CD4-positive, alpha-beta memory T cell (primary cell): ENCODE measurements at regions of chr11 and their contacts with region 1.

Region 1: GRCh38 chr11:72793425-72794367 is at the start of gene STARD10:
- DNase-seq: peak; percentile 94 to 98 (median 95)
- H3K4me3 ChIP-seq: peak within 1 kb of the TSS; percentile 81 to 96
- H3K4me3 Mint-ChIP-seq: peak within 1 kb of the TSS; percentile 96 to 99 (median 98)
- H3K27ac ChIP-seq: peak within 1 kb of the TSS; percentile 97
- H3K27ac Mint-ChIP-seq: peak within 1 kb of the TSS; percentile 99 to 100 (median 100)
- H3K4me1 ChIP-seq: peaks cover 23% of the 10 kb centered on the region
- H3K4me1 Mint-ChIP-seq: peaks cover 13 to 28% (median 22%) of the 10 kb centered on the region in 4 donors
- H3K27me3 ChIP-seq: no peaks in the 10 kb centered on the region
- H3K27me3 Mint-ChIP-seq: no peaks in the 10 kb centered on the region
- total RNA-seq, gene STARD10: 23.0 to 23.5 TPM

Region 2: GRCh38 chr11:72642884-72643511 is 150.7 kb before region 1 on chr11:
- CTCF ChIA-PET with region 1: no interaction called
- POLR2A ChIA-PET with region 1: no interaction called
- intact Hi-C with region 1: no loop called
- DNase-seq: peak in 4 of 5 donors; percentile 66 to 75 (median 67)
- H3K4me3 ChIP-seq: peak overlapping the region in 1 of 2 donors; percentile 47
- H3K4me3 Mint-ChIP-seq: peak overlapping the region in 5 of 8 donors; percentile 10 to 76 (median 47)
- H3K27ac ChIP-seq: no peak overlapping the region
- H3K27ac Mint-ChIP-seq: no peak overlapping the region
- H3K4me1 ChIP-seq: no peaks in the 10 kb centered on the region
- H3K4me1 Mint-ChIP-seq: peaks cover 0 to 9% (median 0%) of the 10 kb centered on the region in 4 donors
- H3K27me3 ChIP-seq: peaks cover 11% of the 10 kb centered on the region
- H3K27me3 Mint-ChIP-seq: peaks cover 3% of the 10 kb centered on the region in 2 donors

Region 3: GRCh38 chr11:72683782-72684200 is 109.9 kb before region 1 on chr11:
- CTCF ChIA-PET with region 1: interaction called, 15 read pairs
- POLR2A ChIA-PET with region 1: interaction called, 4 read pairs
- intact Hi-C with region 1: loop called (anchors 5 kb)
- DNase-seq: peak; percentile 43 to 58 (median 53)
- H3K4me3 ChIP-seq: no peak overlapping the region
- H3K4me3 Mint-ChIP-seq: no peak overlapping the region
- H3K27ac ChIP-seq: no peak overlapping the region
- H3K27ac Mint-ChIP-seq: peak overlapping the region in 2 of 7 donors; percentile 13 to 57
- H3K4me1 ChIP-seq: no peaks in the 10 kb centered on the region
- H3K4me1 Mint-ChIP-seq: peaks cover 11 to 23% (median 15%) of the 10 kb centered on the region in 4 donors
- H3K27me3 ChIP-seq: no peaks in the 10 kb centered on the region
- H3K27me3 Mint-ChIP-seq: no peaks in the 10 kb centered on the region

Region 4: DNA sequence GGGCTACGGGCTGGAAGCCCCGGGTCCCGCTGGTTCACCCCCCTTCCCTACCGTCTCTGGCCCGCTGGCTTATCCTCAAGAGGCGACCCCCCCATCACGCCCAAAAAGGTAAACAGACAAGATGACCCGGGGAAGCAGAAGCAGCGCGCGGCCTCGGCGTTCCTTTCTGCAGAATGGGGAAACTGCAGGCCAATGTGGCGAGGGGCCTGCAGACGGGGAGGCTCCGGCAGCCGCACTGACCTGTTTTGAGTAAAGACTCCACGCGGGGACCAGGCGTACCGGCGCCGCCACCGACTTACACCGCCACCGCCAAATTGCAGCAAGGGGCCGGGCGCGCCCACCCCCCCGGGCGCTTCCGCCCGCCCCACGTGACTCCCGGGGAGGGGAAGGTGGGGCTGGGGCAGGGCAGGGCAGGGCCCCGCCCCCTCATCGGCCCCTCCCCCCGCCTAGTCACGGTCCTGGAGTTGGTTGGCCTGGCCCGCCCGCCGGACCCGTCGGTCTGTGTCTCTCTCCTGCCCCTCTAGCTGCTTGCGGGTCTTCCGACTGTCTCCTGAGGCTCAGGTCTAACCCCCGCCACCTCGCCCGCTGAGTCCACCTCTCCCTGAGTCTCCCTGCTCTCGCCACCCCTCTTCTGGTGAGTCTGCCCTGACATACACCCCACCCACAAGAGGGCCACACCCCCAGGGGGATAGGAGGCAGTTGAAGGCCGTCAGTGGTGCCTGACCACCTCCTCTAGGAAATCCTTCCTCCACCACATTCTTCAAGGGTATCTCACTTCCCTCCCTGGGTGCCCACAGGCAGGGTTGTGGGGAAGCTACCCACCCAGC is 41.4 kb before region 1 on chr11 and contains the start of gene ARAP1:
- CTCF ChIA-PET with region 1: interaction called, 4 read pairs
- POLR2A ChIA-PET with region 1: interaction called, 4 read pairs
- intact Hi-C with region 1: loop called (anchors 1 kb)
- DNase-seq: peak; percentile 73 to 85 (median 74)
- H3K4me3 ChIP-seq: peak within 1 kb of the TSS; percentile 78 to 89
- H3K4me3 Mint-ChIP-seq: peak within 1 kb of the TSS; percentile 92 to 99 (median 95)
- H3K27ac ChIP-seq: peak within 1 kb of the TSS; percentile 75
- H3K27ac Mint-ChIP-seq: peak within 1 kb of the TSS; percentile 94 to 98 (median 96)
- H3K4me1 ChIP-seq: peaks cover 50% of the 10 kb centered on the region
- H3K4me1 Mint-ChIP-seq: peaks cover 32 to 55% (median 46%) of the 10 kb centered on the region in 4 donors
- H3K27me3 ChIP-seq: no peaks in the 10 kb centered on the region
- H3K27me3 Mint-ChIP-seq: no peaks in the 10 kb centered on the region
- total RNA-seq, gene ARAP1: 144 to 157 TPM

Region 5: DNA sequence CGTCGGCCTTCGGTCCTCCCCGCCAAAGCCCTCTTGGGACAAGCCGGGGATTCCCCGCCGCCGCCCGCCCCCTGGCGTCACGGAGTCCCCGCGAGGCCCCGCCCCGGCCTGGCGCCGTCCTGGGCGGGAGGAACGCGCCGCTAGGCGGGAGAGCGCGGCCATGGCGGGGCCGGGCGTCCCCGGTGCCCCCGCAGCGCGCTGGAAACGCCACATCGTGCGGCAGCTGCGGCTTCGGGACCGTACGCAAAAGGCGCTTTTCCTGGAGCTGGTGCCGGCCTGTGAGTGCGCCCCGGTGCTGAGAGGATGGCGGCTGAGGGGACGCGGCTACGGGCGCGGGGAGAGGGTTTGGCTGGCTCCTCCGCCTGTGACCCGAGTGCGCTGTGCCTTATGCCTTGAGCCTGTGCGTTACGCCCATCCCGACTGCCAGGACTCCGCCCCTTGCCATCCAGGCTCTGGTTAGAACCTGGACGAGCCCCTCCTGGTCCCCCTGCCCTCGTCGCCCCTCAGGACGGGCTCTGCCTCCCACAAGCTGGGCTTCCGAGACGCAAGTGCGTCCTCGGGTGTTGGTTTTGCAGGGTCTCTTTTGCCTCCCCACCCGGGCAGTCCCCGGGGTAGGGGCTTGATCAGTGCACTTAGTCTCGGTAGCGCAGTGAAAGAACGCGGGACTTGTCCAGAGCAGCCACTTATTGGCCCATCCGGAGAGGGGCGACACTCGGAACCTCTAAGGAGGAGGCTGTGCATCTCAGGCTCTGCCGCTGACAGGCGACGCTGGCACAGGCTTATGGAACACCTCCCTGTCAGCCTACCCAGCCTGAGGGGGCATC is 20.8 kb after region 1 on chr11 and contains the start of gene ATG16L2:
- CTCF ChIA-PET with region 1: interaction called, 84 read pairs
- POLR2A ChIA-PET with region 1: interaction called, 34 read pairs
- intact Hi-C with region 1: loop called (anchors 1 kb)
- DNase-seq: peak; percentile 88 to 97 (median 92)
- H3K4me3 ChIP-seq: peak within 1 kb of the TSS; percentile 77 to 99
- H3K4me3 Mint-ChIP-seq: peak within 1 kb of the TSS; percentile 98 to 100 (median 98)
- H3K27ac ChIP-seq: peak within 1 kb of the TSS; percentile 97
- H3K27ac Mint-ChIP-seq: peak within 1 kb of the TSS; percentile 98 to 100 (median 99)
- H3K4me1 ChIP-seq: peaks cover 31% of the 10 kb centered on the region
- H3K4me1 Mint-ChIP-seq: peaks cover 31 to 67% (median 49%) of the 10 kb centered on the region in 4 donors
- H3K27me3 ChIP-seq: no peaks in the 10 kb centered on the region
- H3K27me3 Mint-ChIP-seq: no peaks in the 10 kb centered on the region
- total RNA-seq, gene ATG16L2: 194 to 202 TPM

Region 6: GRCh38 chr11:73141848-73142286 is 348.2 kb after region 1 on chr11:
- CTCF ChIA-PET with region 1: interaction called, 5 read pairs
- POLR2A ChIA-PET with region 1: interaction called, 11 read pairs
- intact Hi-C with region 1: no loop called
- DNase-seq: peak in 1 of 5 donors; percentile 78
- H3K4me3 ChIP-seq: peak overlapping the region; percentile 80 to 94
- H3K4me3 Mint-ChIP-seq: peak overlapping the region; percentile 92 to 98 (median 96)
- H3K27ac ChIP-seq: peak overlapping the region; percentile 97
- H3K27ac Mint-ChIP-seq: peak overlapping the region; percentile 84 to 98 (median 95)
- H3K4me1 ChIP-seq: peaks cover 49% of the 10 kb centered on the region
- H3K4me1 Mint-ChIP-seq: peaks cover 30 to 55% (median 39%) of the 10 kb centered on the region in 4 donors
- H3K27me3 ChIP-seq: no peaks in the 10 kb centered on the region
- H3K27me3 Mint-ChIP-seq: no peaks in the 10 kb centered on the region